Pancreas (tissue), 10 donors: ENCODE measurements at regions of chr3 and their contacts with region 1.

Region 1: DNA sequence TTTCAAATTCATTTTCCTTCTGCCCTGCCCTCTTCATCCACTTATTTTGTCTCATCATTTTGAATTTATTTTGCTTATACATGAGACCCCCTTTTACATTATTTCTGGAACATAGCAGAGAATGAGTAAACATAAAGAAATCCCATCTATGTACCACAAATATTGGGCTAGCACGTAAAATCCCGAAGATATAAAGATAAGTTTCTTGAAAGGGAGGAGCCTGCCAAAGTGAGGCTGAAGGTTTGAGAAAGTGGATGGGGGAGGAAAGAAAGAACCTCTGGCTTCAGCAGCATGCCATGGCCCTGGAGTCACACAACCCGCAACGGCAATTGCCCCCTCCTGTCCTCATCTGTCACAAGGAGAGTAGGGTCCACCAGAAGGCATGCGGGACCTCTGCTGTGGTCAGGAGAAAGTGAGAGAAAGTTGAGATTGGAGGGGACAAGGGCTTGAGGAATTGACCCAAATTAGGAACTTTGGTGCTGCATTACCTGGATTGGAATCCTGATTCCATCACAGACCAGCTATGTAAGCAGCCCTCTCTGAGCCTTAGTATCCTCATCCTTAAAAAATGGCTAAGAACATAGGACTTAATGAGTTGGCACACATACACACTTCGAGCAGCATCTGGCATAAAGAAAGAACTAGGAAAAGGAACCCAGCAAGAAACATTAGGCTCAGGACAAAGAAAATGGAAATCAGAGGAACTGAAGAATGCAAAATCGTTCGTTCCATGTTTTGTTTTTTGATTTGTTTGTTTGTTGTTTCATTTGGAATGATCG is 53.7 kb upstream of the GYG1 start:
- DNase-seq: no peak
- ATAC-seq: no peak
- H3K4me3 ChIP-seq: no peak overlapping the region
- H3K27ac ChIP-seq: no peak overlapping the region
- H3K4me1 ChIP-seq: no peaks in the 10 kb centered on the region
- H3K27me3 ChIP-seq: no peaks in the 10 kb centered on the region
- CTCF ChIP-seq: no peak

Region 2: DNA sequence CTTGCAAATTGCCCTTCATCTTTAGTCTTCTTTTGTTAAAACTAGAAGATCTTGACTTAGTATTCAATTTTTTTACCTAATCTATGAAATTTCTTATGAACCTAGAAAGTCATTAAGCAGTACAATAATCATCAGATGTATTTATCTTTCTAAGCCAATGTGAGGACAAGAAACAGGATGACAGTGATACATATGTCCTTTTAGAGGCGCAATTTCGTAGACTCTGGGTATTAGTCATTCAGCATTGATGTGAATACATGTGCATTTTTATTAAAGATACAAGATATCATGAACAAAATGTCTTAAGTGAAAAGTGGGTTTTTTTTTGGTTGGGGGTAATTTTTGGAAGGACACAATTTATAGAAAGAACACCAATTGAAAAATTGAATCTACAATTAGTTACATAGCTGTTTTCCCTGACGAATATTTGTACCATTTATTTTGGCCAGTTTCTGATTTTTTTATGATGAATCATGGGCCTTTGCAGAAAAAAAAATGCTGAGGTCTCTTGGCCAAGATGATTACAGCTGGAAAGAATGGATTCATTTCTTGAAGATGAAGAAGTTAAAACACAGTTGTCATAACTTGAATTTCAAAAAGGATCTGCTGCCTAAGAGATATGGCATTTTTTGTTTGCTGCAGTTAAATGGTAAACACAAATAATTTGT is 288.8 kb before region 1 on chr3:
- intact Hi-C with region 1: no loop called
- DNase-seq: no peak
- ATAC-seq: no peak
- H3K4me3 ChIP-seq: no peak overlapping the region
- H3K27ac ChIP-seq: no peak overlapping the region
- H3K4me1 ChIP-seq: no peaks in the 10 kb centered on the region
- H3K27me3 ChIP-seq: no peaks in the 10 kb centered on the region
- CTCF ChIP-seq: no peak

Region 3: GRCh38 chr3:148866261-148866660 is 71.4 kb before region 1 on chr3:
- intact Hi-C with region 1: loop called in 2 of 3 experiments (anchors 5 kb)
- DNase-seq: no peak
- ATAC-seq: no peak
- H3K4me3 ChIP-seq: no peak overlapping the region
- H3K27ac ChIP-seq: no peak overlapping the region
- H3K4me1 ChIP-seq: peaks cover 0 to 4% (median 0%) of the 10 kb centered on the region in 3 donors
- H3K27me3 ChIP-seq: no peaks in the 10 kb centered on the region
- CTCF ChIP-seq: no peak